Activated T-helper 2 cell treated with anti-CD3 and anti-CD28 coated beads, Interferon-gamma antibody, Interleukin-2, Interleukin-4, amounts not matched to agents 10 μg/mL and 5 μg/mL and 100 μg/mL, durations not matched to agents 14 hours and 24 hours and 36 hours (primary cell): ENCODE measurements at regions of chr15 and their contacts with region 1.

Region 1: GRCh38 chr15:78506971-78507830 is at the start of gene HYKK:
- DNase-seq: peak; percentile 74
- H3K4me3 Mint-ChIP-seq: peak within 1 kb of the TSS; percentile 88
- H3K27ac Mint-ChIP-seq: no peak within 1 kb of the TSS
- H3K4me1 Mint-ChIP-seq: peaks cover 16% of the 10 kb centered on the region
- H3K27me3 Mint-ChIP-seq: peaks cover 23% of the 10 kb centered on the region
- total RNA-seq, gene HYKK: 0.74 and 0.89 TPM in 2 replicates

Region 2: DNA sequence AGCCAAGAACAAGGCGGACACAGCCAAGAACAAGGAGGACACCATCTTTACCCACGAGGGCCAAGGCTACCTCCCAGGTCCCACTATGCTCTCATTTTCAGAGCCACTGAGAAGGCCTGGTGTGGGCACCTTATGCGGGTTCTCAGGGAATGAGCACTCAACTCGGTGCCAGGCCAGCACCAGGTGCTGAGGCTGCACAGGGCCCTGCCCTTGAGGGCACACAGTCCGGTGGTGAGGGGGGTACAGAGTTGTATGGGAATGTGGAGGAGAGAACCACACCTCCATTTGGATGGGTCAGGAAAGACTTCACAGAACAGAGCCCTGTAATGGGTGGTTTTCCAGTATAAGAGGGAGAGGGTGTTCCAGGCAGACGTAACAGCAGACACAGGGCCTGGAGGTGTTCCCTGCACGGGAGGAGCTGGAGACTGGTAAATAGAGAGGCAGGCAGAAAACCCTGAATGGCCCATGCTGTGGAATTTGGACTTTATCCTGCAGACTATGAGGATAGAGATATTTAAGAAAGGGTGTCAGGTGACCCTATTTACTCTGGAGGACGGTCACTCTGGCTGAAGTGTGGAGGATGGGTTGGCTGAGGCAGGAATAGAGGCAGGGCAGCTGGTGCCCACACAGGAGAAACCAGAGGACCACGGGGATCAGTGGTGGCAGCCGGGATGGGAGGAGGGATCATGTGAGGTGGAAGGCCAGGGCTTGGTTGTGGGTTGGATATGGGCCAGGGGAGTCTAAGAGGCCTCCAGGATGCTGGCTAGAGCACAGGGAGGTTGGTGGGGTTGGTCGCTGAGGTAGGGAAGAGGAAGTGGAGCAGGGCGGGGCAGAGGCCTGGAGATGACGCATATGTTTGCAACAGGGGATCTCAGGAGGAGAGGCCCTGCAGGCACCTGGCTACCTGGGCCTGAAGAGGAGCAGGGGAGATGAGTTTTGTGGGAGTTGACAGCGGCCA is 132.5 kb before region 1 on chr15:
- intact Hi-C with region 1: no loop called
- DNase-seq: no peak
- H3K4me3 Mint-ChIP-seq: no peak overlapping the region
- H3K27ac Mint-ChIP-seq: no peak overlapping the region
- H3K4me1 Mint-ChIP-seq: peaks cover 5% of the 10 kb centered on the region
- H3K27me3 Mint-ChIP-seq: peaks cover 16% of the 10 kb centered on the region

Region 3: GRCh38 chr15:78540141-78540928 is 33.1 kb after region 1 on chr15 and contains the start of gene PSMA4:
- intact Hi-C with region 1: loop called (anchors 1 kb)
- DNase-seq: peak; percentile 92
- H3K4me3 Mint-ChIP-seq: peak within 1 kb of the TSS; percentile 97
- H3K27ac Mint-ChIP-seq: peak within 1 kb of the TSS; percentile 95
- H3K4me1 Mint-ChIP-seq: peaks cover 29% of the 10 kb centered on the region
- H3K27me3 Mint-ChIP-seq: peaks cover 1% of the 10 kb centered on the region
- total RNA-seq, gene PSMA4: 330 and 331 TPM in 2 replicates